Activated CD4-positive, alpha-beta memory T cell treated with anti-CD3 and anti-CD28 coated beads for 36 hours (primary cell): ENCODE measurements at regions of chr5 and their contacts with region 1.

Region 1: DNA sequence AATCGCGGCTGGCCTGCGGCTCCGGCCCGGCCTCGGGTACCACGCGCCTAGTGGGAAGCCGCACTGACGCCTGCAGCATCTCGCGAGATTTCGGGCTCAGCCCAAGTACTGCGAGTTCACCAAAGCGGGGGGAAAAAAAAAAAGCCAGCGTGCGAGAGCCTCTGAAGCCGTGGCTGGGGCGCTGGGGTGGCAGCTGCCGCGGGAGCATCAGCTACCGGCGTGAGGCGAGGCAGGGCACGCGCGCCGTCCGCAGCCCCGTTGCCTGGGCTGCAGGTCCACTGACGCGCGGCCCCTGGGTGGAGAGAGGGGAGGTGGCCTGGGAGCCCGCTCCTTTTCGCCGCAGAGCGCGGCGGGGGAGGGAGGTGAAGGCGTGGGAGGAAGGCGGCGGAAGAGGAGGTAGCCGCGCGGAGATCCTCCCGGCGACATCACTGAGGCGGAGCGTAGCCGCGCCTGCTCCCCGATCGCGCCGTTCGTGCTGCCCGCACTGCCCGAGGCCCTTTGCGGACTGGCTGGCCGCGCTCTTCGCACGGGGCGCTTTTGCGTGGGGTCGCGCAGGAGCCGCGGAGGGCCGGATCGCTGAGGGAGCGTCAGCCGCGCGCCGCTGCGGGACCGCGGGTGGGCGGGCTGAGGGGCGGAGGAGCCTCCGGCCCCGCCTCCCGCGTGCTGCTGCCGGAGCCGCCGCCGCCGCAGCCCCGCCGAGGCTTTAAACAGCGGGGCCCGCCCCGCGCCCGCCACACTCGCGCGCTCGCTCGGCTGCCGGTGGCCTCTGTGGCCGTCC is at the start of gene SLC12A2:
- DNase-seq: peak; percentile 92
- H3K4me3 Mint-ChIP-seq: peak within 1 kb of the TSS; percentile 89
- H3K27ac Mint-ChIP-seq: peak within 1 kb of the TSS; percentile 93
- H3K4me1 Mint-ChIP-seq: peaks cover 54% of the 10 kb centered on the region
- H3K27me3 Mint-ChIP-seq: no peaks in the 10 kb centered on the region
- total RNA-seq, gene SLC12A2: 9.7 to 9.9 TPM

Region 2: DNA sequence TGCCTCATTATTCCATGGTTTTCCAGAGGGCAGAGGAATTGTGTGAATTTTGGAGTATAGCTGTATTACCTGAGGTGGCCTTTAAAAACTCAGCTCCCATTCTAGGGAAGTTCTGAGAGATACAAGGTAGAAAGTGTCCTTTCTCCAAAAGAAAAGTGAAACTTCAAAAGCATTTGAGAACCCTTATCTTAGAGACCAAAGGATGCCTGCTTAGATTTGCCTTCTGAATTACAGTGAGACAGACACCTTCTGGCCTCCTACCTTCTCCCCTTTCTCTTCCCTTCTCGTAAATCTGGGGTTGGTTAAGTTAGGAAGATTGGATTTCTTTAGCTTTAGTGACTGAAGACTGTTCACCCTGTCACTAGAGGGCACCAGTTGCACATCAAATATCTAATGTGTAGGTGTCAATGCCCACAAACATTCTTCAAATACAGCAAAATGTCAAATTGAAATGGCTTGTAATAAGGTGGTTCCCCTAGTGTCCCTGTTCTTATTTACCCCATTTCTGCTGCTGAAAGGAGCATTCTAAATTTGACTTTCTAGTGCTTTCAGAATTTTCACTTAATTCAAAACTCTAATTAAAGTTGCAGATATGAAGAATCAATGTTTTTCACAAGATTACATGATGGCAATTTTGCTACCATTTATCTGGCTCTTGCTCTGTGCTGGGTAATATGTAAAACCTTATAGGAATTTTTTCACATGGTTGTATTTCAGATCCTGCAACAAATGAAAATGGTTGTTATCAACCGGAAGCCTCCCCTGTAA is 519.0 kb before region 1 on chr5:
- CTCF ChIA-PET with region 1: interaction called, 4 read pairs
- POLR2A ChIA-PET with region 1: no interaction called
- intact Hi-C with region 1: loop called (anchors 5 kb)
- DNase-seq: peak; percentile 38
- H3K4me3 Mint-ChIP-seq: no peak overlapping the region
- H3K27ac Mint-ChIP-seq: no peak overlapping the region
- H3K4me1 Mint-ChIP-seq: peaks cover 5% of the 10 kb centered on the region
- H3K27me3 Mint-ChIP-seq: peaks cover 26% of the 10 kb centered on the region

Region 3: DNA sequence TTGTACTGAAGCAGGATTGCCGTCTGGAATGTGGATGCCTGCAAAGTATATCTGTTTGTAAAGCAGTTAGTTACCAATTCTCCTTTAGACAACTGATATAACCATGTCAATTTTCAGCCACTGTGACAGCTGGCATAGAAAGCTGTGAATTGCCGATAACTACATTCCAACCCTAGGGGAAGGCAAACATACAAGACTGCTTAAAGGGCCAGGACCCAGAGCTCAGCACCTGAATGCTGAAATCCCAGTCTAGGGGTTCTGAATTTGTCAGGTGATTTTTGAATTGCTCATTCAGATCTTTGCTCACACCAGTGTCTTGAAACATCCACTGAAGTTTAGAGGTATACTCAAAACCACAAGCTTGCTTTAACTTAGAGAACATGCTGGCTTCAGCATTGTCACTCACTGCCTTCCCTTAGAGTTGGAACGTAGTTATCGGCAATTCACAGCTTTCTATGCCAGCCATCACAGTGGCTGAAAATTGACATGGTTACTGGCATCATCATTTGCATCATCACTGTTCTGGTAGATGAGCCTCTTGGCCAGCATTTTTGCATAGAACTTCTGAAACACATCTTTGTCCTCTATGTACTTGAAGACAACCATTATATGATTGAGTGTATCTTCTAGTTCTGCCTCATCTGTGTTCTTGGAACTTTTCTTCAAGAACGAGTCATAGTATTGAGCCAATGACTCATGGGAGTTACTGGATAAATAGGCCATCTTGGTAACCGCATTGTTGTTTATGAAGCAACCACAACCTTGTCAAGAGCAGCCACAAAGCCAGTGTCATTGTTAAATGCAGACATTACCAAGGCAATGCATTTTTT is 297.9 kb before region 1 on chr5:
- CTCF ChIA-PET with region 1: no interaction called
- POLR2A ChIA-PET with region 1: interaction called, 4 read pairs
- intact Hi-C with region 1: loop called (anchors 1 kb)
- DNase-seq: peak; percentile 46
- H3K4me3 Mint-ChIP-seq: no peak overlapping the region
- H3K27ac Mint-ChIP-seq: peak overlapping the region; percentile 87
- H3K4me1 Mint-ChIP-seq: peaks cover 19% of the 10 kb centered on the region
- H3K27me3 Mint-ChIP-seq: peaks cover 12% of the 10 kb centered on the region

Region 4: GRCh38 chr5:127909078-127909477 is 174.1 kb before region 1 on chr5:
- CTCF ChIA-PET with region 1: interaction called, 4 read pairs
- POLR2A ChIA-PET with region 1: no interaction called
- intact Hi-C with region 1: loop called (anchors 5 kb)
- DNase-seq: peak; percentile 16
- H3K4me3 Mint-ChIP-seq: no peak overlapping the region
- H3K27ac Mint-ChIP-seq: no peak overlapping the region
- H3K4me1 Mint-ChIP-seq: peaks cover 3% of the 10 kb centered on the region
- H3K27me3 Mint-ChIP-seq: peaks cover 9% of the 10 kb centered on the region

Region 5: GRCh38 chr5:129094087-129094923 is 1011.1 kb after region 1 on chr5 and contains the start of gene ISOC1:
- CTCF ChIA-PET with region 1: no interaction called
- POLR2A ChIA-PET with region 1: interaction called, 3 read pairs
- intact Hi-C with region 1: loop called (anchors 1 kb)
- DNase-seq: peak; percentile 94
- H3K4me3 Mint-ChIP-seq: peak within 1 kb of the TSS; percentile 82
- H3K27ac Mint-ChIP-seq: peak within 1 kb of the TSS; percentile 64
- H3K4me1 Mint-ChIP-seq: peaks cover 22% of the 10 kb centered on the region
- H3K27me3 Mint-ChIP-seq: peaks cover 7% of the 10 kb centered on the region
- total RNA-seq, gene ISOC1: 23.3 to 25.1 TPM